Breast epithelium (tissue), 4 donors: ENCODE measurements at regions of chr12 and their contacts with region 1.

Region 1: DNA sequence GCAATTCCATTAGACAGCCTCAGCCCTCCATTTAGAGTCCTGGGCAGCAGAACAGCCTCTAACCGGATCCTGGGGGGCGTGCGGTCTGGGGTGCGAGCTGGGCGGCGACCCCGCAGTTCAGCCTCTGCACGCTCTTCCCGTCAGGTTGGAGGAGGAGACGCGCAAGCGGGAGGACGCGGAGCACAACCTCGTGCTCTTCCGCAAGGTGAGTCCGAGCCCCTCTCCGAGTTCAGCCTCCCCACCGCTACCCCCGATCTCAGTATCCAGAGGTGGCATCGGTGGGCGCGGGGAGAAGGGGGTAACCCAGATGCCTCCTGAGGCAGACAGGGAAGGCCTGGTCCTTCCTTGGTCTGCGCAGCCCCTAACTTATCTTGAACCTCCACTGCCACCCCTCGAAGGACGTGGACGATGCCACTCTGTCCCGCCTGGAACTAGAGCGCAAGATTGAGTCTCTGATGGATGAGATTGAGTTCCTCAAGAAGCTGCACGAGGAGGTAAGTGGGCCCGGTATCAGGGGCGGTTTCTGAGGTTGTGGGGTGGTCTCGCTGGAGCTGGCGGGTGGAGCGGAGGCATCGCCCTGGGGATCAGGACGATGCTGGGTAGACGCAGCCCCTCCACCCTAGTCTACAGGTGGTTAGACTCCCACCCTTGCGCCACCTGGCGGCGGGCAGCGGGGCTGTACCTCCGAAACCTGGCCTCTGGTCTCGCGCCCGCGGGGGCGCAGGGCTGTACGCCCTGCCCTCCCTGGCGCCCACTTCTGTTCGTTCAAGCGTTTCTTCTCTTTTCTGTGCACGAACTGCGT is 1.3 kb downstream of the PRPH start:
- DNase-seq: no peak
- H3K4me3 ChIP-seq: peak overlapping the region in 2 of 3 donors; percentile 46 to 62
- H3K27ac ChIP-seq: no peak overlapping the region
- H3K4me1 ChIP-seq: peaks cover 0 to 7% of the 10 kb centered on the region in 2 donors
- H3K27me3 ChIP-seq: peaks cover 11 to 50% of the 10 kb centered on the region in 2 donors
- CTCF ChIP-seq: peak; percentile 40 to 55 (median 54)
- POLR2A ChIP-seq: no peak

Region 2: DNA sequence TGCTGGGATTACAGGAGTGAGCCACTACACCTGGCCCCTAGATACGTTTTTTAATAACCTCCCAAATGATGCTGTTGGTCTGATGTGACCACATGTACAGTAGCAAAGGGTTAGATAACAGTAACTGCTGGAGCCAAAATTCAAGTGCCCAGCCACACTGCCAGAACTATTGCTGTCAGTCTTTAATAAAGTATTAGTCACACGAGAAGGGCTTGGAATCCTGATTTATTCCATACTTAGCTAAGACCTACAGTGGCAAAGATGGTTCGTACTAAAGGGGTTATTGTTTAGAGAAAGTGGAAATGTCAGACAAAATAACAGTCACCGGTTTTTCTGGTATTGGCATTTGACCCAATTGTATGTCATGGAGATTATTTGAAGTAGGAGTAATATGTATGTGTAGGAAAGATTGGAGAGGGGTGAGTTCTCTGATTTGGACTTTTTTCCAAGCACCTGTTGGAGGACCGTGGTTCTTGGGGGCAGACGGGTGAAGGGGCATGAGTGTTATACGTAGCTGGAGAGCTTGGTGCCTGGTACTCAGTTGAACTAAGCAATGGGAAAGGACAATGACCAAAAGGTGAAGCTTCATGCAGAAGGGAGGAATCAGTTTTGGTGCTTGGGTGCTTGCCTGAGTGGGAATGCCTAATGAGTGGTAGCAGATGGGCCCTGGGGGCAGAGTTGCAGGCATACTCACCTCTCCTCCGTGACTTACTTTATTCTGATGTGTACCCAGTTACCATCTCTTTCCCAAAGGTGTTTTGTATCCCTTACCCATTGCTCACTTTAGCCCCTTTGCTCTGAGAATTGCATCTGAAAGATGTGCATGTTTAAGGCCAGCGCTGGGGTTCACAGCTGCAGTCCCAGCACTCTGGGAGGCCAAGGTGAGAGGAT is 21.6 kb before region 1 on chr12:
- intact Hi-C with region 1: no loop called
- DNase-seq: no peak
- H3K4me3 ChIP-seq: no peak overlapping the region
- H3K27ac ChIP-seq: no peak overlapping the region
- H3K4me1 ChIP-seq: no peaks in the 10 kb centered on the region
- H3K27me3 ChIP-seq: no peaks in the 10 kb centered on the region
- CTCF ChIP-seq: no peak
- POLR2A ChIP-seq: no peak

Region 3: DNA sequence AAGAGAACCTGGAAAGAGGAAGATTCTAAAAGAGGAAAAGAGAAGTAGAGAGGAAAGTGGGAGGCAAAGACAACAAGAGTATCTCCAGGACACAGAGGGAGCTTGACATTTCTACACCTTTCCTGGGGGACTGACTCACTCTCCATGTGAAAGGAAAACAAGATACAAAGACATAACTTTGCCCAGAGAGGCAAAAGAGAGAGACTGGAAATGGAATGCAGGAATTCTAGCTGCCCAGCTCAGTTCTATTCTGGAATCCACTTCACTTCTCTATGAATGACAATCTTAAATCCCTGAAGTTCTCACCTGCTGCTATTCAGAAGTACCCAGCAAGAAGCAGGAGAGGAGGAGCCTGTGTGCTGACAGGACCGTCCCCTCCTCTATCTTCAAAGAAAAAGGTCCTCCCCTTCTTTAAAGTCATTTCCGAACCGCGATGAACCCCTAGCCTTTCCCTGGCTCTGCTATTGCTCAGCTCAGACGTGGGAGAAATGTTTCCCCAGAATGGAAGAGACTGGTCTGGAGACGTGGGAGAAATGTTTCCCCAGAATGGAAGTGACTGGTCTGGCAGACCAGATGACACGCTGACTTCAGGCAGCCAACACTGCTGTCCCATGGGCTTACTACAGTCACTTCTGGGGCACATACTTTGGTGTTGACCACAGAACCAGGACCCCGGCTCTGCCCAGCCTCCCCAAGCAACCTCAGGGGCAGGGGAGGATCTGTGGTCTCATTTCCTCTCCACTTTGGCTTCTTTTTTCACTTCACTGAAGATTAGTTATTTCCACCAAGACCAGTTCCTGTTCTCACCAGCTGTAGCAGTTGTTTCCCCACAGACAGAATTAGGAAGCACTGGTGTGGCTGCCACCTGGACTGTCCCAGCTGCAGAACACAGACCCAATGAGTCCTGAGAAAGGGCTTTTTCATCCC is 402.6 kb after region 1 on chr12:
- intact Hi-C with region 1: loop called (anchors 5 kb)
- DNase-seq: no peak
- H3K4me3 ChIP-seq: peak overlapping the region in 1 of 3 donors; percentile 48
- H3K27ac ChIP-seq: peak overlapping the region; percentile 11 to 75
- H3K4me1 ChIP-seq: peaks cover 6 to 8% of the 10 kb centered on the region in 2 donors
- H3K27me3 ChIP-seq: no peaks in the 10 kb centered on the region
- CTCF ChIP-seq: no peak
- POLR2A ChIP-seq: no peak